ENCODE measurements at regions of chr1 and their contacts with region 1.

Region 1: DNA sequence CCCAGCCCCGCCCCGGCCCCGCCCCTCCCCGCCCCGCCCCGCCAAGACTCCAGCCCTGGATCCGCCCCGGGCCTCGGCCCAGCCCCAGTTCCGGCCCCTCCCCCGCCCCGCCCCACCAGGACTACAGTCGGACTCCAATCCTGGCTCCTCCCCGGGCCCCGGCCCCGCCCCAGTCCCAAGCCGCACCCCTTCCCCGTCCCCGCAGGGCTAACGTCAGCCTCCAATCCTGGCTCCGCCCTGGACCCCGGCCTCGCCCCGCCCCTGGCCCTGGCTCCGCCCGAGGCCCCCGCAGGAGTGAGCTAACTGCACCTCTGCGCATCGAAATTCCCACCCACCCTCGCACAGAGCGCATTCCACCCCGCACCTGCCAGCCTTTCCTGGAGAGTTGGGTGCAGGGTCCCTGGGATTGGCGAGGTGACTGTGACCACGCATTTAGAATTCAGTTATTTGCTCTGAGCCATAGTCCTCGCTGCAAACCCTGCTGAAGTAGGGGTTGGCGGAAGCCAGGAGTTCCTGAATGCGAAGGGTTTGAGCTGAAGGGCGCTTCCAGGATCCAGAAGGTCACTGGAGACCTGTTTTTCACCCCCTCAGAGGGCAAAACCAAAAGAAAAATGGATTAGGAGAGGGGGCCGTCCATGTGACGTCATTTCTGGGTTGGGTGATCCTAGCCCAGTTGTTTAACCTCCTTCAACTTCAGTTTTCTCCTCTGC is 588 bp upstream of the IGSF8 start:
- DNase-seq: peak; percentile 97 to 100 (median 99)
- ATAC-seq: peak; percentile 87
- H3K4me3 ChIP-seq: peak overlapping the region; percentile 61
- H3K4me3 Mint-ChIP-seq: peak overlapping the region; percentile 87
- H3K27ac ChIP-seq: peak overlapping the region; percentile 93
- H3K27ac Mint-ChIP-seq: peak overlapping the region; percentile 88
- H3K4me1 ChIP-seq: peaks cover 66% of the 10 kb centered on the region
- H3K4me1 Mint-ChIP-seq: peaks cover 74% of the 10 kb centered on the region
- H3K27me3 ChIP-seq: no peaks in the 10 kb centered on the region
- H3K27me3 Mint-ChIP-seq: no peaks in the 10 kb centered on the region
- CTCF ChIP-seq: no peak

Region 2: DNA sequence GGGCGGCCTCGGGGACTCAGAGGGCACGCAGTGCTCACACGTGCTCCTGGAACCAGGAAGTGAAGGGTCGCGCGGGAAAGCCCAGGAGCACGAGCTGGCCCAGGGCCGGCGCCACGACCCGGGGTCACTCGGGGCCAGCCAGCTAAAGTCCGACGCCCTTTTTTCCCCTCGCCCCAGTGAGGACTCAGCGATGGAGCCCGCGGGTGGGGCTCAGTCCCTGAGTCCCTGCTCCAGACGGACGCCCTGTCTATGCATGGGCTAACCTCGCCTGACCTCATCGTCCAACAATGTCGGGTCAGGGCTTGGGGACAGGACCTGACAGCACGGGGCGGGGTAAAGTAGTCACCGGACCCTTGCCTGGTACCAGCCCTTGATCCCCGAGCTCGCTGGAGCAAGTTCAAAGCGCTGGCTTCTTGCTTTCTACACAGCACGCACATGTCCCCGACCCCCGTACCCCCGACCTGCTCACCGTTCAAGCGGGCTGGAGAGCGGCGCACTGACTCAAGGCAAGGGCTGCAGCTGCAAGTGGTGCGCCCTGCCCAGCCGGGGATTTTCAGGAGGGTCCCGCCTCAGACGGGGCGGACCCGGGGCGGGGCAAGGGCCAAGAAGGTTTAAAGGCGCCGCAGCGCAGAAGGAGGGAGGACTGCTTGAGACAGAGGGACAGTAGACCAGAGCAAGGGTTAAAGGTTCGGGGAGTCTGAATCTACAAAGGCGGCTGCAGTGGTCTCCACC is 173.9 kb before region 1 on chr1 and contains the start of gene TAGLN2:
- CTCF ChIA-PET with region 1: no interaction called
- POLR2A ChIA-PET with region 1: interaction called, 10 read pairs
- intact Hi-C with region 1: loop called in 1 of 2 experiments (anchors 5 kb)
- DNase-seq: peak; percentile 76 to 95 (median 88)
- ATAC-seq: peak; percentile 52
- H3K4me3 ChIP-seq: peak within 1 kb of the TSS; percentile 98
- H3K4me3 Mint-ChIP-seq: peak within 1 kb of the TSS; percentile 94
- H3K27ac ChIP-seq: peak within 1 kb of the TSS; percentile 99 to 100
- H3K27ac Mint-ChIP-seq: peak within 1 kb of the TSS; percentile 94
- H3K4me1 ChIP-seq: peaks cover 52% of the 10 kb centered on the region
- H3K4me1 Mint-ChIP-seq: peaks cover 44% of the 10 kb centered on the region
- H3K27me3 ChIP-seq: no peaks in the 10 kb centered on the region
- H3K27me3 Mint-ChIP-seq: no peaks in the 10 kb centered on the region
- CTCF ChIP-seq: no peak
- total RNA-seq, gene TAGLN2: 301 to 311 TPM

Region 3: GRCh38 chr1:160085686-160086455 is 13.1 kb before region 1 on chr1:
- CTCF ChIA-PET with region 1: interaction called, 33 read pairs
- POLR2A ChIA-PET with region 1: interaction called, 23 read pairs
- intact Hi-C with region 1: no loop called
- DNase-seq: peak; percentile 66 to 87 (median 73)
- ATAC-seq: peak; percentile 71
- H3K4me3 ChIP-seq: no peak overlapping the region
- H3K4me3 Mint-ChIP-seq: peak overlapping the region; percentile 58
- H3K27ac ChIP-seq: no peak overlapping the region
- H3K27ac Mint-ChIP-seq: peak overlapping the region; percentile 47
- H3K4me1 ChIP-seq: peaks cover 15% of the 10 kb centered on the region
- H3K4me1 Mint-ChIP-seq: peaks cover 22% of the 10 kb centered on the region
- H3K27me3 ChIP-seq: peaks cover 22 to 24% of the 10 kb centered on the region in 2 experiments
- H3K27me3 Mint-ChIP-seq: peaks cover 24% of the 10 kb centered on the region
- CTCF ChIP-seq: peak; percentile 82

Region 4: DNA sequence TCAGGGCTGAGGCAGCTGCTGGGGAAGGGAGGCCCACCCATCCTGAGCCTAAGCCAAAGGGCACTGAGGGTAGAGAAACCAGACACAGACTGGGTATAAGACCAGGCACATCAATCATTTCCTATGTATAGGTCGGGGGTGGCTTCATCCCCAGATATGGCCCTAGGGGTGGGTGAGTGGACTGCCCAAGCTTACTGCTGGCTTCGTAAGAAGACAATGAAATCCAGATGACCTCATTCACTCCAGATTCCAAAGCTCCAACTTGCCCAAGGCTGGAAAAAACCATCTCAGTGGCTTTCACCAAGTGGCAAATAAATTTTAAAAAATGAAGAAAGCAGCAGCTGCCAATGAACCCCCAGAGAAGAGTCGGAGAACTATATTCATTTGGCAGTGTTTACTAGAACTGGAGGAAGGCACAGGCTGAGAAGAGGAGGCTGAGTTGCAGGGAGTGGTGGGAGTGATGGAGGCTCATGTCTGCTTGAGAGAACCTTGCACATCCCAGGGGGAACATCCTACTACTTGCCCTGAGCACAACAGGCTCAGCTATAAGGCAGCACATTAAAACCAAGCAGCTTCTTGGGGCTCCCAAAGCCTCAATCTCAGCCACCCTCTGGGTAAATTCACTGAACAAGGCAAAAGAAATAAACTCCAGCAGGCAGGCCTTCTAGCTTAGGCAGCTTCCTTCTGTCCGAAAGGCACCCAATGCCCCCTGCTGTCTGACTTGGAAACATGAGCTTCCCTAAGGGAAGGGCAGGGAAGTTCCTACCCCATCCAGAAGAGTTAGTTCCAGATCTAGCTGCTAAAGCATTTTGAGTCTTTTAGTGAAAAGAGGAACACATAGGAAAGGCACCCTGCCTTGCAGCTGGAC is 120.3 kb after region 1 on chr1:
- CTCF ChIA-PET with region 1: no interaction called
- POLR2A ChIA-PET with region 1: no interaction called
- intact Hi-C with region 1: no loop called
- DNase-seq: peak in 3 of 14 experiments; percentile 7 to 32 (median 17)
- ATAC-seq: no peak
- H3K4me3 ChIP-seq: no peak overlapping the region
- H3K4me3 Mint-ChIP-seq: no peak overlapping the region
- H3K27ac ChIP-seq: no peak overlapping the region
- H3K27ac Mint-ChIP-seq: no peak overlapping the region
- H3K4me1 ChIP-seq: no peaks in the 10 kb centered on the region
- H3K4me1 Mint-ChIP-seq: no peaks in the 10 kb centered on the region
- H3K27me3 ChIP-seq: no peaks in the 10 kb centered on the region
- H3K27me3 Mint-ChIP-seq: no peaks in the 10 kb centered on the region
- CTCF ChIP-seq: no peak

Region 5: GRCh38 chr1:160251687-160252526 is 152.9 kb after region 1 on chr1:
- CTCF ChIA-PET with region 1: interaction called, 24 read pairs
- POLR2A ChIA-PET with region 1: interaction called, 16 read pairs
- intact Hi-C with region 1: loop called in 1 of 2 experiments (anchors 1 kb)
- DNase-seq: peak; percentile 25 to 82 (median 49)
- ATAC-seq: peak; percentile 100
- H3K4me3 ChIP-seq: no peak overlapping the region
- H3K4me3 Mint-ChIP-seq: no peak overlapping the region
- H3K27ac ChIP-seq: no peak overlapping the region
- H3K27ac Mint-ChIP-seq: peak overlapping the region; percentile 57
- H3K4me1 ChIP-seq: no peaks in the 10 kb centered on the region
- H3K4me1 Mint-ChIP-seq: peaks cover 34% of the 10 kb centered on the region
- H3K27me3 ChIP-seq: no peaks in the 10 kb centered on the region
- H3K27me3 Mint-ChIP-seq: no peaks in the 10 kb centered on the region
- CTCF ChIP-seq: peak; percentile 76

Region 6: DNA sequence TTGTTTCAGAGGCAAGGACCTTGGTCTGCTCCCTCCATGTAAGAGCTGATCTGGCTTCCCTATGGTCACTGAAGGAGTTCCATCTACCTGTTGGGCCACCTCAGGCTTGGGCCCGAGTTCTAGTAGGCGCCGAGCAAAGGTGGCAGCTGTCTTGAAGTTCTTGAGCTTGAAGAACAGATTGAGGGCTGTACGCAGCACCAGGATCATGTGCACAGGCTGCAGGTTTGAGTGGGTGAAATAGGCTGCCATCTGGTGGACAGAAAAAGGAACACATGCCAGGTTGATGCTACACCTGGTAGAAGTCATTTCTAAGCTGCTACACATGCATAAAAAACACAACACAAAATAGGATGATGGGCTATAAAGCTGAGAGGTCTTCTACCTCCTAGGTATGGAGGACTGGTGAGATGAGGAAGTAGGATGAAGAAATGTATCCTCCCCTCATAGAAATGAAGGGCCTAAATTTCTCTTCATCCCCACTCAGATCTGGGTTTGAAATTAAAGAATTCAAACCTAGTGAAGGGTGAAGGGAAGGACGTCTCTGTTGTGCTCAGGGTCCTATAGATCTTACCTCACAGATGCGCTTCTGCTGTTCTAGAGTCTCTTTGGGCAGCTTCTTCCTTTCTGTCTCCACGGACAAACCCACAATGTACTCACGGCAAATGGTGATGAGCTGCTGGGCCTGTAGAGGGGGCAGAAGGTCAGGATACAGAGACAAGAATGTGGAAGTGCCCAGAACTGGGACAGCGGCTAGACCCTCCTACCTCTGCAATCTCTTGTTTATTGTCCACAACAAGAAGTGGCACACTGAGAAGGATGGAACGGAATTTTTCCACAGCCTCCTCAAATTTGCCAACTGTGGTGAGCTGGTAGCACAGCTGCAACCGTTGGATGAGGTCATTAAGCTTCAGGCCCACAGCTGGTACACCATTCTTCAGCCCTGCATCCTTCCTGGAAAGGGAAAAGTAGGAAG is 192.5 kb after region 1 on chr1:
- CTCF ChIA-PET with region 1: interaction called, 25 read pairs
- POLR2A ChIA-PET with region 1: interaction called, 27 read pairs
- intact Hi-C with region 1: loop called (anchors 1 kb)
- DNase-seq: peak; percentile 48 to 88 (median 58)
- ATAC-seq: peak; percentile 99
- H3K4me3 ChIP-seq: no peak overlapping the region
- H3K4me3 Mint-ChIP-seq: peak overlapping the region; percentile 5
- H3K27ac ChIP-seq: no peak overlapping the region
- H3K27ac Mint-ChIP-seq: peak overlapping the region; percentile 16
- H3K4me1 ChIP-seq: peaks cover 6% of the 10 kb centered on the region
- H3K4me1 Mint-ChIP-seq: peaks cover 7% of the 10 kb centered on the region
- H3K27me3 ChIP-seq: no peaks in the 10 kb centered on the region
- H3K27me3 Mint-ChIP-seq: no peaks in the 10 kb centered on the region
- CTCF ChIP-seq: peak; percentile 78

Region 7: GRCh38 chr1:161399257-161399998 is 1300.4 kb after region 1 on chr1:
- CTCF ChIA-PET with region 1: no interaction called
- POLR2A ChIA-PET with region 1: no interaction called
- intact Hi-C with region 1: loop called in 1 of 2 experiments (anchors 5 kb)
- DNase-seq: peak; percentile 88 to 97 (median 93)
- ATAC-seq: peak; percentile 85
- H3K4me3 ChIP-seq: peak overlapping the region; percentile 87
- H3K4me3 Mint-ChIP-seq: peak overlapping the region; percentile 97
- H3K27ac ChIP-seq: peak overlapping the region; percentile 95 to 98
- H3K27ac Mint-ChIP-seq: peak overlapping the region; percentile 99
- H3K4me1 ChIP-seq: peaks cover 25% of the 10 kb centered on the region
- H3K4me1 Mint-ChIP-seq: peaks cover 23% of the 10 kb centered on the region
- H3K27me3 ChIP-seq: no peaks in the 10 kb centered on the region
- H3K27me3 Mint-ChIP-seq: peaks cover 29% of the 10 kb centered on the region
- CTCF ChIP-seq: peak; percentile 79

Measured in CD4-positive, alpha-beta T cell (primary cell).